BJ (cell line): ENCODE measurements at regions of chr19 and their contacts with region 1.

Region 1: GRCh38 chr19:39052243-39052746 is 19.9 kb upstream of the FBXO27 start:
- DNase-seq: no peak
- H3K4me3 ChIP-seq: no peak overlapping the region
- H3K27me3 ChIP-seq: no peaks in the 10 kb centered on the region
- CTCF ChIP-seq: peak; percentile 93

Region 2: GRCh38 chr19:39031368-39032062 is 20.8 kb before region 1 on chr19:
- CTCF ChIA-PET with region 1: interaction called, 41 read pairs
- POLR2A ChIA-PET with region 1: no interaction called
- DNase-seq: peak; percentile 18
- H3K4me3 ChIP-seq: peak overlapping the region; percentile 69
- H3K27me3 ChIP-seq: no peaks in the 10 kb centered on the region
- CTCF ChIP-seq: no peak

Region 3: GRCh38 chr19:39038098-39038497 is 14.2 kb before region 1 on chr19:
- CTCF ChIA-PET with region 1: interaction called, 41 read pairs
- POLR2A ChIA-PET with region 1: no interaction called
- DNase-seq: no peak
- H3K4me3 ChIP-seq: no peak overlapping the region
- H3K27me3 ChIP-seq: no peaks in the 10 kb centered on the region
- CTCF ChIP-seq: peak; percentile 35

Region 4: GRCh38 chr19:39067104-39067503 is 14.8 kb after region 1 on chr19:
- CTCF ChIA-PET with region 1: interaction called, 20 read pairs
- POLR2A ChIA-PET with region 1: no interaction called
- DNase-seq: no peak
- H3K4me3 ChIP-seq: no peak overlapping the region
- H3K27me3 ChIP-seq: no peaks in the 10 kb centered on the region
- CTCF ChIP-seq: no peak

Region 5: DNA sequence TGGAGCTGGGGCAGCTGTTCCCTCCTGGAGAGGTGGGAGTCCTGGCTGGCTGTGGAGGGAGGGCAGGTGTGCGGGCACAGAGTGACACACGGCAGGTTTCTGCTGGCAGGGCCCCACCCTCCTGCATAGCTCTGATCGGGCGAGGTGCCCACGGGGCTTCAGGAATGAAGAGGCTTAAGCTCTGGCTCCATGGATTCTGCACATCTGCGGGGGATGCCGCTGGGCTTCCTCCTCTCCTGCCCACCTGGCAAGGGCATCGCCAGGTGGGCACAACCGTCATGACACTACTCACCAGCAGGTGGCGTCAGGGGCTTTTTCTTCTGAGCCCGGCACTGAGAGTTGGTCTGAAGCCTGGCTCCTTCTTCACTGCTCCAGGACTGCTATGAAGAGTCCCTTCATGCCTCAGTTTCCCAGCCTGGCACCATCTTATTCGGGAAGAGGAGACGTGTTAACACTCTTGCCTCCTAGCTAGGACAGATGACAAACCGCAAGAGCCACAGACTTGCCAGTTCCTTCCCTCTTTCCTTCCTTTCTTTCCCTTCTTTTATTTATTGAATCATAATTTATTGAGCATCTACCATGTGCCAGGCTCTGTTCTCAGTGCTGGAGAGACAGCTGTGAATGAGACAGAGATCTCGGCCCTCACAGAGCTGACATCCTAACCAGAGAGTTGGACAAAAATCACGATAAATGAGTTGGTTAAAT is 58.1 kb after region 1 on chr19:
- CTCF ChIA-PET with region 1: interaction called, 11 read pairs
- POLR2A ChIA-PET with region 1: no interaction called
- DNase-seq: no peak
- H3K4me3 ChIP-seq: no peak overlapping the region
- H3K27me3 ChIP-seq: peaks cover 1% of the 10 kb centered on the region; the same call in 1 of the 2 replicates
- CTCF ChIP-seq: peak; percentile 82